HepG2 (cell line): ENCODE measurements at regions of chr9 and their contacts with region 1.

Region 1: DNA sequence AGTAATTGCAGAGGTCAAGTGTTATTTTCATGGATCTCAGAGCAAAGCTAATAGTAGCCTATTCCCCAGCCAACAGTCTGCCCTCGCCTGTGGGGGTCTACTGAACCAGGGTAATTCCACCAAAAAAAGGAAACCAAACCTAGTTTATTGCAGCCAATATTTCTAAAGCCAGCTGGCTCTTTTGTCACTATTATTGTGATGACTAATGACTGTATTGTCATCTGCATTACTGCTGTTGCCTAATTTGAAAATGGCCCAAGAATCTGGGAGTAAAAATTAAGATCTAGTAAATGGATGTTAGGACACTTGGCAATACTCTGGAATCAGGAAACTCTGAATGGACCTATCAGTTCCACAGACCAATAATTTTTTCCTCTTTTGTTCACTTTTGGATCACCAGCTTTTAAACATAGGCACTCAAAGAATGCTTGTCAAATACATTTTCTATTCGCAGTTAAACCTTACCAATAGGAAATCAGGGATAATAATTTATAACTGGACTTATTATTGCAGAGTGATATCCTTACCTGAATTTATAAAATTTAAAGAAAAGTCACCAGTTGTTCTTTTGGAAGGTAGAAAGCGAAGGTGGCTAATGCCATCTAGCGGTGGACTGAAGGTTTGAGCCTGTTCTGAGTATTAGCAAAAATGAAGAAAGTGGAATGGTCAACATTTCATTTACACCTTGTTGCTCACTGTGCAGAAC is 69.2 kb downstream of the SYK start:
- DNase-seq: peak; percentile 25
- ATAC-seq: no peak
- H3K4me3 ChIP-seq: no peak overlapping the region
- H3K27ac ChIP-seq: no peak overlapping the region
- H3K4me1 ChIP-seq: no peaks in the 10 kb centered on the region
- H3K27me3 ChIP-seq: peaks cover 0 to 6% of the 10 kb centered on the region in 2 experiments; a peak in 1 of 5 replicates
- CTCF ChIP-seq: peak; percentile 71
- EP300 ChIP-seq: no peak
- POLR2A ChIP-seq: no peak
- RAD21 ChIP-seq: no peak

Region 2: DNA sequence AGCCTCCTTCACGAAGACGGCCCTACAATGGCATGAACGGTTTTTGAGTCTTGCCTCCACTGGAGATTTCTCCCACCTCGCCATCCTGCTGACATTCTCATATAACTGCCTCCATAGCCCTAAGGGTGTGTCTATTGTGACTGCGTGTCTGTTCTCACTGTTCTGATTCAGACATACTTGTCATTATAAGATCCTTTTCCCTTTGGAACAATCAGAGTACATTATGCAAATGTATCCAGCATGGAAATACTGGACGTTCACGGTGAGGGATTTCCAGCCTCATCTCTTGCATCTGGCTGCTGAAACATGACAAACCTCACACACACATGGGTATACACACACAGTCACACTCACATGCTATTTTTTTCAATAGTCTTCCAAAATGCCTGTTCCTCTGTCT is 630.2 kb before region 1 on chr9:
- CTCF ChIA-PET with region 1: no interaction called
- POLR2A ChIA-PET with region 1: no interaction called
- in situ Hi-C with region 1: loop called (anchors 25 kb)
- intact Hi-C with region 1: no loop called
- DNase-seq: no peak
- ATAC-seq: no peak
- H3K4me3 ChIP-seq: no peak overlapping the region
- H3K27ac ChIP-seq: no peak overlapping the region
- H3K4me1 ChIP-seq: no peaks in the 10 kb centered on the region
- H3K27me3 ChIP-seq: no peaks in the 10 kb centered on the region
- CTCF ChIP-seq: no peak
- EP300 ChIP-seq: no peak
- POLR2A ChIP-seq: no peak
- RAD21 ChIP-seq: no peak

Region 3: GRCh38 chr9:90309809-90310520 is 560.8 kb before region 1 on chr9:
- CTCF ChIA-PET with region 1: no interaction called
- POLR2A ChIA-PET with region 1: no interaction called
- in situ Hi-C with region 1: no loop called
- intact Hi-C with region 1: loop called (anchors 5 kb)
- DNase-seq: no peak
- ATAC-seq: no peak
- H3K4me3 ChIP-seq: no peak overlapping the region
- H3K27ac ChIP-seq: no peak overlapping the region
- H3K4me1 ChIP-seq: no peaks in the 10 kb centered on the region
- H3K27me3 ChIP-seq: 0 out of 5 replicates have a peak, but pooled peaks cover under 1 to 1% of the 10 kb centered on the region in 2 experiments
- CTCF ChIP-seq: no peak
- EP300 ChIP-seq: no peak
- POLR2A ChIP-seq: no peak
- RAD21 ChIP-seq: no peak